ENCODE measurements at regions of chr11 and their contacts with region 1.

Region 1: GRCh38 chr11:64246871-64247728 is at the start of gene PPP1R14B:
- DNase-seq: peak; percentile 95
- H3K4me3 ChIP-seq: peak within 1 kb of the TSS; percentile 92 to 98
- H3K27ac ChIP-seq: peak within 1 kb of the TSS; percentile 96 to 98
- H3K4me1 ChIP-seq: peaks cover 9 to 46% of the 10 kb centered on the region in 2 experiments; a peak in 2 of 4 replicates
- H3K27me3 ChIP-seq: no peaks in the 10 kb centered on the region
- CTCF ChIP-seq: no peak; the same call in 1 of the 2 replicates
- EP300 ChIP-seq: no peak
- RAD21 ChIP-seq: no peak
- polyA plus RNA-seq, gene PPP1R14B: 373 and 523 TPM in 2 replicates

Region 2: GRCh38 chr11:64204464-64204989 is 42.6 kb before region 1 on chr11:
- CTCF ChIA-PET with region 1: interaction called, 25 read pairs
- POLR2A ChIA-PET with region 1: no interaction called
- DNase-seq: peak; percentile 89
- H3K4me3 ChIP-seq: no peak overlapping the region
- H3K27ac ChIP-seq: peak overlapping the region in 1 of 2 experiments; percentile 6; a peak in 1 of 4 replicates
- H3K4me1 ChIP-seq: peaks cover 4 to 27% of the 10 kb centered on the region in 2 experiments; a peak in 3 of 4 replicates
- H3K27me3 ChIP-seq: no peaks in the 10 kb centered on the region
- CTCF ChIP-seq: peak; percentile 85
- EP300 ChIP-seq: no peak
- RAD21 ChIP-seq: peak; percentile 84

Region 3: DNA sequence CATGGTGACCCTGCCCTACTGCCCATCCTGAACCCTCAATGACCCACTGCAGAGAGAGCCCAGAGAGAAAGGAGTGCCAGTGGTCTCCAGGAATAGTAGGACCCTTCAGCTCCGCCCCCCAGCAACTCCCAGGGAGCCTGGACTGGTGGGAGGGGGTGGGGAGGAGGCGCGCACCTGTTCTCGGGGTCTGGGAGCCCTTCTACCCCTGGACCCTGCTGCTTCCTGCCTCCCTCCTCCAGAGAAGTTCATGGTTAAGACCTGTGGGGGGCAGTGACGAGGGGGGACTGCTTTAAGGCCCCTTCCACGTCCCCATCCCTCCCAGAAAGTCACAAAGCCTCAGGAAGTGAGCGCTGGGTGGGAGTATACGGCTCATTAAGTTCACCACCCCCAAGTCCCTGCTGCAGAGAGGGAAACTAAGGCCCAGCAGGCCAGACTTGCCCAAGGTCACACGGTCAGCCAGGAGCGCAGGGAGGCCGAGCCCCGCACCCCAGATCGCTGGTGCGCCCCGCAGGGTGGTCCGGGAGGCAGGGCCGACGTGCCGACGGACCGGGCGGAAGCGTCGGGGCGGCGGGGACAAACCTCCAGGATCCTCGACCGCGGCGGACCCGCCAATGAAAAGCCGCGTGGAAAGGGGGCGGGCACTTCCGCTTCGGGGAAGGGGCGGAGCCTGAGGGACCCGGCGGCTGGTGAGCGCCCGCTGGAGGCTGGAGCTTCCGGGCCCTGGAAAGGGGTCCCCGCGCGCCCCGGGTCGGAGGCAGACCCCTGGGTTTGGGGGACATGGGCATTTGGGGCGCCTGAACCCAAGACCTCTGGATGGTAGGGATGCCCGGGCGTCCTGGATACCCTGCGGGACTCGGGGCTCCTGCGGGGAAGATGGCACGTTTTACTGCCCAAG is 21.2 kb before region 1 on chr11 and contains the starts of genes NUDT22 and TRPT1:
- CTCF ChIA-PET with region 1: interaction called, 36 read pairs
- POLR2A ChIA-PET with region 1: interaction called, 5 read pairs
- DNase-seq: peak; percentile 97
- H3K4me3 ChIP-seq: peak within 1 kb of the TSS; percentile 88 to 97
- H3K27ac ChIP-seq: peak within 1 kb of the TSS; percentile 47 to 88
- H3K4me1 ChIP-seq: peaks cover 9 to 34% of the 10 kb centered on the region in 2 experiments; a peak in 2 of 4 replicates
- H3K27me3 ChIP-seq: no peaks in the 10 kb centered on the region
- CTCF ChIP-seq: peak; percentile 16
- EP300 ChIP-seq: no peak
- RAD21 ChIP-seq: no peak
- polyA plus RNA-seq, gene NUDT22: 72.7 and 74.0 TPM in 2 replicates
- polyA plus RNA-seq, gene TRPT1: 61.5 and 62.4 TPM in 2 replicates

Region 4: DNA sequence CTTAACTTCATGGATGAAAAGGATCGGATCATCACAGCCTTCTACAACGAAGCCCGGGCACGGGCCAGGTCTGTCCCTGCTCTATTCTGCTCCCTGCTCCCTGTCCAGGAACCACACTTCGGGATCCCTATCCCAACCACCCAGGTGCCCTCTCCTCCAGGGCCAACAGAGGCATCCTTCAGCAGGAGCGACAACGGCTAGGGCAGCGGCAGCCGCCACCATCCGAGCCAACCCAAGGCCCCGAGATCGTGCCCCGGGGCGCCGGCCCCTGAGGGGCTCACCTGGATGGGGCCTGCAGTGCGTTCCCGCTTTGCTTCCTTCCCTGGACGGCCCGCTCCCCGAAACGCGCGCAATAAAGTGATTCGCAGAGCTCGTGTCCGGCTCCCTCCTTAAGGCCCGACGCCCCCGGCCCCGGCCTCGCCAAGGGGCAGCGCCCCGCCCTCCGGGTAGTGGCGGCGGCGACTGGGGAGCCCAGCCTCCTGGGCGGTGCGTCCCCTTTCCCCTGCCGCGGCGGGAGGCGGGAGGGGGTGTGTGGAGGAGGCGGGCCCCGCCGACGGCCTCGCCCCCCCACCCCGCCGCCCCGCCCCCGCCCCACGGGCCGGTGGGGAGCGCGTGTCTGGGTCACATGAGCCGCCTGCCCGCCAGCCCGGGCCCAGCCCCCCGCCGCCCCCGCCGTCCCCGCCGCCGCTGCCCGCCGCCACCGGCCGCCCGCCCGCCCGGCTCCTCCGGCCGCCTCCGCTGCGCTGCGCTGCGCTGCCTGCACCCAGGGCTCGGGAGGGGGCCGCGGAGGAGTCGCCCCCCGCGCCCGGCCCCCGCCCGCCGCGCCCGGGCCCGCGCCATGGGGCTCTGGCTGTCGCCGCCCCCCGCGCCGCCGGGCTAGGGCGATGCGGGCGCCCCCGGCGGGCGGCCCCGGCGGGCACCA is 12.9 kb before region 1 on chr11 and contains the start of gene VEGFB:
- CTCF ChIA-PET with region 1: interaction called, 15 read pairs
- POLR2A ChIA-PET with region 1: interaction called, 3 read pairs
- DNase-seq: peak; percentile 92
- H3K4me3 ChIP-seq: peak within 1 kb of the TSS; percentile 69 to 70
- H3K27ac ChIP-seq: peak within 1 kb of the TSS in 1 of 2 experiments; percentile 83; a peak in 2 of 4 replicates
- H3K4me1 ChIP-seq: peaks cover 11 to 46% of the 10 kb centered on the region in 2 experiments; a peak in 2 of 4 replicates
- H3K27me3 ChIP-seq: no peaks in the 10 kb centered on the region
- CTCF ChIP-seq: no peak
- EP300 ChIP-seq: no peak
- RAD21 ChIP-seq: no peak
- polyA plus RNA-seq, gene VEGFB: 16.3 and 29.9 TPM in 2 replicates

Region 5: GRCh38 chr11:64263021-64263946 is 16.2 kb after region 1 on chr11:
- CTCF ChIA-PET with region 1: interaction called, 119 read pairs
- POLR2A ChIA-PET with region 1: interaction called, 112 read pairs
- DNase-seq: peak; percentile 70
- H3K4me3 ChIP-seq: no peak overlapping the region
- H3K27ac ChIP-seq: peak overlapping the region; percentile 29 to 94; a peak in 3 of 4 replicates
- H3K4me1 ChIP-seq: peaks cover 3 to 47% of the 10 kb centered on the region in 2 experiments; a peak in 3 of 4 replicates
- H3K27me3 ChIP-seq: no peaks in the 10 kb centered on the region
- CTCF ChIP-seq: peak; percentile 25; the same call in 1 of the 2 replicates
- EP300 ChIP-seq: no peak
- RAD21 ChIP-seq: no peak

Region 6: GRCh38 chr11:64284048-64284961 is 37.2 kb after region 1 on chr11 and contains the start of gene BAD:
- CTCF ChIA-PET with region 1: interaction called, 17 read pairs
- POLR2A ChIA-PET with region 1: interaction called, 3 read pairs
- DNase-seq: peak; percentile 99
- H3K4me3 ChIP-seq: peak within 1 kb of the TSS; percentile 60 to 95
- H3K27ac ChIP-seq: peak within 1 kb of the TSS; percentile 87 to 96
- H3K4me1 ChIP-seq: peaks cover 8 to 21% of the 10 kb centered on the region in 2 experiments; a peak in 2 of 4 replicates
- H3K27me3 ChIP-seq: no peaks in the 10 kb centered on the region
- CTCF ChIP-seq: no peak
- EP300 ChIP-seq: no peak
- RAD21 ChIP-seq: no peak
- polyA plus RNA-seq, gene BAD: 75.6 and 80.9 TPM in 2 replicates

Region 7: DNA sequence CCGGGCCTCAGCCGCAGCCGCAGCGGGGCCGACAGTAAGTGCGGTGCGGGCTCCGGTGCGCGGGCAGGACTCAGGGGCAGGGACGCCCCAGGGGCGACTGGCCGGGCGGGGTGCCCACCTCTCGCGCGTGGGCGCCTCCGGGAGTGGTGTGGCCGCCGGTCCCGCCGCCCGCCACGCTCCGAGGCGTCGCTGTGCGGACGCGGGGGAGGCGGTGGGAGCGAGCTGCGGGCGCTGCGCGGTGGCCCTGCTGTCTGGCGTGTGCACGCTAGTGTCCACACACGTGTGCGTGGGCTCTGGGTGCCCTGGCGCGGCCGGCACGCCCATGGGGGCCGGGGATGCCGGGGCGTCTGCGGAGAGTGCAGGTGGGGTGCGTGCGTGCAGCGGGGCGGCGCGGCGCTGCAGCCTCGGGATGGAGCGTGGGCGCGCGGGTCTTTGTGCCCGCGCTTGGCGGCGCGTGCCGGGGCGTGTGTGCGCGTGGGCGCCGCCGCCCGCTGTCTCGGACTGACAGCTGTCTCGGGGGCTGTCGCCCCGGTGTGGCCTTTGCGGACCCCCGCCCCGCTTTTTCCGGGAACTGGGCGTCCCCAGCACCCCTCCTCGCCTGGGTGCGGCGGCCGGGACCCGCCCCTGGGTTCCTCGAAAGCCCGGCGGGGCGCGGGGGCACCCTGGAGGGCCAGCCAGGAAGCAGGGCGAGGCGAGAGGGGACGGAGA is 44.8 kb after region 1 on chr11:
- CTCF ChIA-PET with region 1: interaction called, 13 read pairs
- POLR2A ChIA-PET with region 1: no interaction called
- DNase-seq: peak; percentile 68
- H3K4me3 ChIP-seq: peak overlapping the region; percentile 39 to 48; a peak in 3 of 4 replicates
- H3K27ac ChIP-seq: no peak overlapping the region
- H3K4me1 ChIP-seq: peaks cover 0 to 11% of the 10 kb centered on the region in 2 experiments; a peak in 1 of 4 replicates
- H3K27me3 ChIP-seq: peaks cover 20% of the 10 kb centered on the region
- CTCF ChIP-seq: no peak
- EP300 ChIP-seq: no peak
- RAD21 ChIP-seq: no peak